ENCODE measurements at regions of chr9 and their contacts with region 1.

Region 1: GRCh38 chr9:17942230-17942897 is 363.5 kb downstream of the SH3GL2 start:
- DNase-seq: no peak
- ATAC-seq: no peak
- H3K4me3 ChIP-seq: no peak overlapping the region
- H3K27ac ChIP-seq: no peak overlapping the region
- H3K4me1 ChIP-seq: no peaks in the 10 kb centered on the region
- H3K27me3 ChIP-seq: no peaks in the 10 kb centered on the region
- CTCF ChIP-seq: no peak

Region 2: GRCh38 chr9:18007621-18008020 is 65.3 kb after region 1 on chr9:
- intact Hi-C with region 1: loop called in 1 of 3 experiments (anchors 10 kb)
- DNase-seq: no peak
- ATAC-seq: no peak
- H3K4me3 ChIP-seq: no peak overlapping the region
- H3K27ac ChIP-seq: no peak overlapping the region
- H3K4me1 ChIP-seq: no peaks in the 10 kb centered on the region
- H3K27me3 ChIP-seq: no peaks in the 10 kb centered on the region
- CTCF ChIP-seq: no peak